HCT116 (cell line): ENCODE measurements at regions of chr1 and their contacts with region 1.

Region 1: GRCh38 chr1:234499119-234499942 is 20.4 kb upstream of the TARBP1 start:
- DNase-seq: peak; percentile 62
- ATAC-seq: peak; percentile 92
- H3K4me3 ChIP-seq: no peak overlapping the region
- H3K27ac ChIP-seq: no peak overlapping the region
- H3K4me1 ChIP-seq: peaks cover 13 to 43% of the 10 kb centered on the region in 2 experiments
- H3K27me3 ChIP-seq: no peaks in the 10 kb centered on the region
- CTCF ChIP-seq: peak; percentile 84 to 92 (median 87)
- POLR2A ChIP-seq: no peak
- RAD21 ChIP-seq: peak; percentile 100

Region 2: DNA sequence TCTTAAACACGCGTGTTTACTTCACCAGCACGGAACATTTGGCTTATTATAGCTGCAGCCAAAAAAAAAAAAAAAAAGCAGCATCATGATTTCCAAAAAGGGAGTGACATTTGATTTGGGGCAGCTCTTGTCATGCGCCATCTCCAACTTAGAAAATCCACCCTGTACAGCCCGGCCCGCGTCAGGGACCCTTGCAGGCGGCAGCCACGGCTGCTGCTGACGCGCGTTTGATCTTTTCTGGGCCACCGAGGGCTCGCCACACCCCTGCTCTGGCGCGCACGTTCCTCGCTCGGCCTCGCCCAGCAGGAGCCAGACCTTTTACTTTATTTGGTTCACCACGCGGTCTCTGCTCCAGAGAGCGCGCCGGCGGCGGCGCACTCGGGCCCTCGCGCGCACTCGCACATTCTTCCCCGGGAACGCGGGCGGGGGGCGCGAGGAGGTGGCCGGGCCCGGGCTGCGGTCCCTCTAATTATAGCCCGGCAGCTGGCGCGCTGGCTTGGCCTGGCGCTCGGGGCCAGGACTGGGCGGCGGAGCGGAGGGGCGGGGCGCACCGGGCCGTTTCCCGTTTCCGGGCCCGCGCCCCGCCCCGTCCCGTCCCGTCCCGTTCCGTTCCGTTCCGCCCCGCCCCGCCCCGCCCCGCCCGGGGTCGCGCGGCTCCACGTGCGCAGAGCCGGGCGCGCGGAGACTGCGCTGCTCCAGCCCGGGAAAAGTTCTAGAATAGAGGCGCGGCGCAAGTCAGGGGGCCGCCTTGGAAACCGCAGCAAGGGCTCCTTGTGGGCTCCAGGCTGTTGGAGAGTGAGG is 100.5 kb after region 1 on chr1:
- CTCF ChIA-PET with region 1: interaction called, 6 read pairs
- POLR2A ChIA-PET with region 1: interaction called, 3 read pairs
- RAD21 ChIA-PET with region 1: no interaction called
- intact Hi-C with region 1: loop called (anchors 2 kb)
- DNase-seq: peak; percentile 51
- ATAC-seq: peak; percentile 85
- H3K4me3 ChIP-seq: peak overlapping the region; percentile 45 to 55
- H3K27ac ChIP-seq: peak overlapping the region; percentile 69
- H3K4me1 ChIP-seq: peaks cover 55 to 61% of the 10 kb centered on the region in 2 experiments
- H3K27me3 ChIP-seq: no peaks in the 10 kb centered on the region
- CTCF ChIP-seq: no peak
- POLR2A ChIP-seq: peak; percentile 35
- RAD21 ChIP-seq: 0 out of 2 replicates have a peak, but pooled peaks have one; percentile 6

Region 3: GRCh38 chr1:234676103-234676594 is 176.8 kb after region 1 on chr1:
- CTCF ChIA-PET with region 1: no interaction called
- POLR2A ChIA-PET with region 1: no interaction called
- RAD21 ChIA-PET with region 1: no interaction called
- intact Hi-C with region 1: no loop called
- DNase-seq: no peak
- ATAC-seq: peak; percentile 99
- H3K4me3 ChIP-seq: peak overlapping the region in 1 of 2 experiments; percentile 5; a peak in 1 of 4 replicates
- H3K27ac ChIP-seq: no peak overlapping the region
- H3K4me1 ChIP-seq: peaks cover 0 to 10% of the 10 kb centered on the region in 2 experiments; a peak in 1 of 4 replicates
- H3K27me3 ChIP-seq: no peaks in the 10 kb centered on the region
- CTCF ChIP-seq: no peak
- POLR2A ChIP-seq: no peak
- RAD21 ChIP-seq: no peak

Region 4: DNA sequence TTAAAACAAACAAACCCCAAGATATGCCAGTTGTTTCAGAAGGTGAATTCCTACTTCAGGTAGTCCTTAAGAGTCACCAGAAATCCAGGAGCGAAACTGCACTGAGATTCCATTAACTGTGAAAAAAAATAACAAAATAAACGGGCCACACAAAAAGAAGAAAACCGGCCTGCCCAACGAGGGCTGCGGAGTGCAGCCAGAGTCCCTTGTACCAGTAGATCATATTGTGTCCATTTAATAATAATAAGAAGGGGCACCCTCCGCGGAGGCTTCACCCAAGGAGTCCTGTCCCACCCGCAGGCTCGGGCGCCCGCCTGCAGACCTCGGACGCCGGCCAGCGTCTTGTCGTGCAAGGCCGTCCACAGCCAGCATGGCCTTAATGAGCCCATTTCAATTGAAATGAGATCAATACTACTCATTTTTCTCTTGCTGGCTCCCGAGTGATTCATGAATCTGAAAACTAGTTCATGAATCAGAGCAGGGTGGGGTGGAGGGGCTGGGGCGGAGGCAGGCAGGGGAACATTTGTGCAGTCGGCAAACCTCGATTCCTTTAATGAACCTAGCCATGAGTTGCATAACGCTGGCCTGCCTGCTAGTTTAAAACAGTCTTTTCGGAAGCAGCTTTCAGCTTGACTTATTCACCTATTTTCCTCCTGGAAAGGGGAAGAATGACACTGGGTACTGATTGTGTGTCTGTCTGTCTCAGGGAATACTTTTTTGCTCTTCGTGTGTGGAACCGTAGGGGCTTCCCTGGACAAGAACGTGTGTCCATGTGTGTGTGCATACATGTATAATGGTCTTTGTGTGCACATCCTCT is 223.8 kb after region 1 on chr1:
- CTCF ChIA-PET with region 1: no interaction called
- POLR2A ChIA-PET with region 1: no interaction called
- RAD21 ChIA-PET with region 1: no interaction called
- intact Hi-C with region 1: loop called (anchors 10 kb)
- DNase-seq: peak; percentile 79
- ATAC-seq: peak; percentile 24
- H3K4me3 ChIP-seq: peak overlapping the region; percentile 16 to 46
- H3K27ac ChIP-seq: peak overlapping the region; percentile 66
- H3K4me1 ChIP-seq: peaks cover 46 to 63% of the 10 kb centered on the region in 2 experiments
- H3K27me3 ChIP-seq: no peaks in the 10 kb centered on the region; the same call in 1 of the 2 replicates
- CTCF ChIP-seq: no peak
- POLR2A ChIP-seq: no peak
- RAD21 ChIP-seq: peak; percentile 30; the same call in 1 of the 2 replicates

Region 5: DNA sequence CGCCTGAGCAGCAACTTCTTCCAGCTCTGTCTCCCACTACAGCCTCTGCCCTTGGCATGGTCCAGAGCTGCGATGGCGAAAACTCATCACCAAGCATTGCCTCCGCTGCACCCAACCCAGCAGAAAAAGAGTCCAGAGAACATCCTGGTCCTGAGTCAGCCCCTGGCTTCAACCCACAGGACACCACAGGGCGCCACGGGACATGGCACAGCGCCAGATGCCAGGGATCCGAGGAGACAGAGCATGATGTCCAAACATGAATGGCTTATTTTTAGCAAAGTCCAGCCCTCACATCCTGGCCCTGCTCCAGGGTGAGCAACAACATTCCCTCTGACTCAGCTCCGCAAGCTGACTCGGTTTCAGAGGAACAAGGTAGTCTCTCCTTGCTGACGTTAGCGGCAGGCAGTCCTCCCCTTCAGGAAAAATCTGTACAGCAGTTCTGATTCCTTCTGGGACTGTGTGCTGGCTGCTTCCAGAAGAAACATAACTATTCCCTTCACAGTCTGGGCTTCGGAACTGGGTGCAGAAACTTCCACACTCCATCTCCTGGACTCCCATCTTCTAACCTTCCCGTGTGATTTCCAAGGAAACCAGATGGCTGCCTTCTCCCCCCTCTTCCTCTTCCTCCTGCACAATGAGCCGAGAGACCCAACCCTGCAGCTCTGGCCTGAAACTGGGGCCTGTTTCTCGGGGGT is 498.0 kb after region 1 on chr1:
- CTCF ChIA-PET with region 1: interaction called, 3 read pairs
- POLR2A ChIA-PET with region 1: no interaction called
- RAD21 ChIA-PET with region 1: no interaction called
- intact Hi-C with region 1: loop called (anchors 5 kb)
- DNase-seq: peak; percentile 97
- ATAC-seq: peak; percentile 75
- H3K4me3 ChIP-seq: peak overlapping the region; percentile 29 to 45
- H3K27ac ChIP-seq: peak overlapping the region; percentile 52
- H3K4me1 ChIP-seq: peaks cover 30 to 38% of the 10 kb centered on the region in 2 experiments
- H3K27me3 ChIP-seq: no peaks in the 10 kb centered on the region; the same call in 1 of the 2 replicates
- CTCF ChIP-seq: no peak
- POLR2A ChIP-seq: no peak
- RAD21 ChIP-seq: peak; percentile 63

Region 6: DNA sequence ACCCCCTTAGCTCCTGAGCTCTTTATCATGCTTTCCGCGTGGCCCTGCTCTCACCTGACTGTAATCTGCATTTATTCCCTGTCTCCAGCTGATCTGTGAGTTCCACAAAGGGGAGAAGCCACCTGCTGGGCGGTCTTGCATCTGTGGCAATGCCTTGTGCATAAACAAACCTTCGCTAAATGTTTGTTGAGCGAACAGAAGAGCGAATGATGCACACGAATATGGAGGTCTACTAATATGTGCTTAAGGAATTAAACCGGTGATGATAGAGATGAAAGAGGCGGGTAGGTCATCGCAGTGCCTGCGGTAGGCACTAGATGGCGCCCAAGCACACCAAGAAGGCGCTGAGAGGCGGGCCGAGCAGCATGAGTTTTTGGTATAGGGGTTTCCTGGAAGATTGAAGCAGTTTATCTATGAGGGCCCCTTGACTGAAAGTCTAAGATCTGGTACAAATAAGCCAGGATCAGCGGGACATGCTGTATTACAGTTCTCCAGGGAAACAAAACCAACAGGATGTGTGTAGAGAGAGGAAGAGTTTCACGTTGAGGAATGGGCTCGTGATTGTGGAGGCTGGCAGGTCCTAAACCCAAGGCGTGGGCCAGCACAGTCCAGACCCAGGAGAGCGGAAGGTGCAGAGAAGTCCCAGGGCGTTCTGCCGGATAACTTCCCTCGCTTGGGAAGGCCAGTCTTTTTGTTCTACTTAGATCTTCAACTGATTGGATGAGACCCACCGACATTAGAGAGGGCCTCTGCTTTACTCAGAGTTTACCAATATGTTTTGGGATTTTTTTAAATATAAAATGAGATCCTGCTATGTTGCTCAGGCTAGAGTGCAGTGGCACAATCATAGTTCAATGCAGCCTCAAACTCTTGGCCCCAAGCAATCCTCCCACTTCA is 594.6 kb after region 1 on chr1:
- CTCF ChIA-PET with region 1: interaction called, 10 read pairs
- POLR2A ChIA-PET with region 1: no interaction called
- RAD21 ChIA-PET with region 1: interaction called in 1 of 2 experiments, 4 read pairs
- intact Hi-C with region 1: no loop called
- DNase-seq: no peak
- ATAC-seq: peak; percentile 94
- H3K4me3 ChIP-seq: no peak overlapping the region
- H3K27ac ChIP-seq: no peak overlapping the region
- H3K4me1 ChIP-seq: peaks cover 0 to 8% of the 10 kb centered on the region in 2 experiments; a peak in 2 of 4 replicates
- H3K27me3 ChIP-seq: no peaks in the 10 kb centered on the region
- CTCF ChIP-seq: peak; percentile 89 to 97 (median 89)
- POLR2A ChIP-seq: no peak
- RAD21 ChIP-seq: peak; percentile 96

Region 7: GRCh38 chr1:235670157-235670776 is 1170.9 kb after region 1 on chr1:
- CTCF ChIA-PET with region 1: no interaction called
- POLR2A ChIA-PET with region 1: no interaction called
- RAD21 ChIA-PET with region 1: no interaction called
- intact Hi-C with region 1: no loop called
- DNase-seq: peak; percentile 7
- ATAC-seq: no peak
- H3K4me3 ChIP-seq: no peak overlapping the region
- H3K27ac ChIP-seq: no peak overlapping the region; the same call in 1 of the 2 replicates
- H3K4me1 ChIP-seq: no peaks in the 10 kb centered on the region
- H3K27me3 ChIP-seq: no peaks in the 10 kb centered on the region
- CTCF ChIP-seq: no peak
- POLR2A ChIP-seq: no peak
- RAD21 ChIP-seq: no peak